PC-3 (cell line): ENCODE measurements at regions of chr11 and their contacts with region 1.

Region 1: DNA sequence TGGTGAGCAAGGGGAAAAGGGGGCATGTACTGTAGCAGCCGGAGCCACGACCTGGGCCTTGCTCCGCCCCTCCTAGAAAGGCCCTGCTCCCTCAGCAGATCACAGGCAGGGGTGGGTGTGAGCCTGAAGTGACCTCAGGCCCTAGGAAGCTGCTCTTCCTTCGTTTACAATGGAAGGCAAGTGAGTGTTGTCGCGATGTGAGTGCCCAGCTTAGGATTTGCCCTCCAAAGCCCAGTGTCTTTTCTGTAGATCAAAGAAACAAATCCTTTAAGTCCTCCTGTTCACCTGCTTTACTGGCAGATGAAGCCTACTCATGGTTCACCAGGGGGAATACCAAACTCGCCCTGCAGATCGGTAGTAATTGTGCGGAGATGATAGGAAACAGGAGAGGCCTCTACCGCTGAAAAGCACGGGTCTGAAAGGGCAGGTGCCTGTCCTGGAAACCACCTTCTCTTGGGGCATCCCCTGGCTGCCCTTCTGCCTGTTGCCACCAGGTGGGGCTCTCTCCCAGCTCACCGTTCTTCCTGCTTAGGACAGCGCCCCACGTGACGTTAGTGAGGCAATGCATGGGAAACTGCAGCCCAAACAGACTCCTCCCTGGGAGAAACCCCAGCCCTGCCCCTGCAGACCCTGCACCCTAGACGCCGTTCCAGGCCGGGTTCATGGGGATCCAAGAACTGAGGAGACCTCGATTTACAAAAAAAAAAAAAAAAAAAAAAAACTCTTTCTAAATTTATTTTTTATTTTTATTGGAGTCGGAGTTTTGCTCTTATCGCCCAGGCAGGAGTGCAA is 45.9 kb upstream of the RAB1B start:
- DNase-seq: peak; percentile 96
- ATAC-seq: peak; percentile 91
- H3K4me3 ChIP-seq: no peak overlapping the region
- H3K27ac ChIP-seq: no peak overlapping the region
- H3K4me1 ChIP-seq: peaks cover 7% of the 10 kb centered on the region
- H3K27me3 ChIP-seq: no peaks in the 10 kb centered on the region
- CTCF ChIP-seq: peak; percentile 99

Region 2: DNA sequence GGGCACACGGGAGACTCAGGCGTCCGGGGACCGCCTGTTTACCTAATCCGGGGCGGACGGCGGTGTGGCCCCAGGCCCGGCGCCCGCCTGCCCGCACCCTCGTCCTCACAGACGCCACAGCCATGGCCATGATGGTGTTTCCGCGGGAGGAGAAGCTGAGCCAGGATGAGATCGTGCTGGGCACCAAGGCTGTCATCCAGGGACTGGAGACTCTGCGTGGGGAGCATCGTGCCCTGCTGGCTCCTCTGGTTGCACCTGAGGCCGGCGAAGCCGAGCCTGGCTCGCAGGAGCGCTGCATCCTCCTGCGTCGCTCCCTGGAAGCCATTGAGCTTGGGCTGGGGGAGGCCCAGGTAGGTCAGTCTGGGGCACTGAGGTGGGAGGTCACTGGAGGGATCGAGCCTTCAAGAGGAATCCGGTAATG is 35.9 kb after region 1 on chr11:
- CTCF ChIA-PET with region 1: no interaction called
- POLR2A ChIA-PET with region 1: interaction called, 4 read pairs
- intact Hi-C with region 1: loop called (anchors 1 kb)
- DNase-seq: no peak
- ATAC-seq: peak; percentile 1; the same call in 1 of the 2 replicates
- H3K4me3 ChIP-seq: peak overlapping the region; percentile 91
- H3K27ac ChIP-seq: no peak overlapping the region
- H3K4me1 ChIP-seq: peaks cover 16% of the 10 kb centered on the region
- H3K27me3 ChIP-seq: no peaks in the 10 kb centered on the region
- CTCF ChIP-seq: peak; percentile 32; the same call in 1 of the 2 replicates